ENCODE measurements at regions of chr14 and their contacts with region 1.

Region 1: DNA sequence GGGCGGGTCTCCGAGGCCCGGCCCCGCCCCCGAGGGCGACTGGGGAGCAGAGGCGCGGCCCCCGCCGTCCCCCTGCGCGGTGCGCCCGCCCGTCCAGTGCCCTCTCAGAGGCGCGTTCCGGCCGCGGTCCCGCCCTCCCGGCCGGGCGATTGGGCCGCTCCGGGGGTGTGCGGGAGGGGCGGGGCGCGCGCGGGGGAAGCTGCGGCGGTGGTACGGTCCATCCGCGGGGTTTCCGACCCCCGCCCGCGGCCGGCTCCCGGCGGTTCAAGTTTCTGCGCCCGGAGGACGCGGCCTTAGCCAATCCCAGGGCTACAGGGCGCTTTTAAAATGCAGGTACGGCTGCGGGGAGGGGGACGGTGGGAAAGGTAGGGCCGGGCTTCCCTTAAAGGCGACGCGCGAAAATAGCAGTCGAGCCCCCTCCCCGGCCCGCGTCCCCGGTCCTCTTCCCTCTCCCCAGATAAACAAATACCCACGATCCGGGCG is 317 bp upstream of the CCDC85C start:
- DNase-seq: peak; percentile 90 to 99 (median 96)
- ATAC-seq: peak; percentile 86 to 91
- H3K4me3 Mint-ChIP-seq: peak overlapping the region; percentile 84 to 97 (median 93)
- H3K27ac Mint-ChIP-seq: peak overlapping the region in 8 of 10 donors; percentile 54 to 94 (median 92)
- H3K4me1 Mint-ChIP-seq: peaks cover 20 to 39% (median 31%) of the 10 kb centered on the region in 4 donors
- H3K27me3 Mint-ChIP-seq: peaks cover 0 to 5% (median 0%) of the 10 kb centered on the region in 5 donors

Region 2: DNA sequence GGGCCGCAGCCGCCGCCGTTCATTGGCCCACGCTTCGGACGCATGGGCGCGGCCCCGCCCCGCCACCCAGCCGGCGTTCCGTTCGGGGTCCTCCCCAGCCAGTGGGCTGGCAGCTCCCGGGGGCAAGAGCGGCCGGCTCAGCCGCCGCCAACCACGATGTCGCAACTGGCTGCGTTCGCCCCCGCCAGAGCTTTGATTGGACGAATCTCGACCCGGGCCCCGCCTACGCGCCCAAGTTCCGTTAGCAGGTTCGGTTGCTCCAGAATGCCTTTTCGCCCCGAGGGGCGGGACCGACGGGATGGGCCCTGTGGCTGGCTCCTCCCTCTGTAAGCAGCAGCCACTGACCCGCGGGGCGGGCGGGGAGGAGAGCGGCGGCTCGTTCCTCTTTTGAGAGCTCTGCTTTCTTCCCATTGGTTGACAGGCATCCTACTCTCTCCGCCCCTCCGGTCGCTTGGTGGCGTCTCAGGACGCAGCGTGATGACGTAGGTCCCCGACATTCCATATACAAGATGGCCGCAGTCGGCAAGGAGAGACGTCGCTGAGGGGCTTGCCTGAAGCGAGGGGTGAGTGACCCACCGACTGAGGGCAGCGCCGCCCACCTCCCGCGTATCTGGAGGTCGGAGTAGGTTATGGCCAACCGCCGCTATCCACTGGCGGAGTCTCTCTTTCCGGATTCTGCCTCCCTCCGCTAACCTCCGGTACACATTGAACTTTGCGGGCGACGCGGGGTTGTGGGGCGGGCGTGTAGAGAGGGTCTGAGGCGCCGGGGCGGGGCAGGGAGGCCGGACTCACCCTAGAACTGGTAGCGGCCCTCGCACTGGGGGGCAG is 123.2 kb before region 1 on chr14 and contains the start of gene CCNK:
- POLR2A ChIA-PET with region 1: interaction called, 27 read pairs
- DNase-seq: peak; percentile 97 to 100 (median 100)
- ATAC-seq: peak; percentile 85 to 86
- H3K4me3 Mint-ChIP-seq: peak within 1 kb of the TSS; percentile 92 to 99 (median 98)
- H3K27ac Mint-ChIP-seq: peak within 1 kb of the TSS; percentile 97 to 100 (median 99)
- H3K4me1 Mint-ChIP-seq: peaks cover 36 to 78% (median 70%) of the 10 kb centered on the region in 4 donors
- H3K27me3 Mint-ChIP-seq: no peaks in the 10 kb centered on the region
- polyA plus RNA-seq, gene CCNK: 13.4 to 19.8 (median 14.0) TPM

Region 3: DNA sequence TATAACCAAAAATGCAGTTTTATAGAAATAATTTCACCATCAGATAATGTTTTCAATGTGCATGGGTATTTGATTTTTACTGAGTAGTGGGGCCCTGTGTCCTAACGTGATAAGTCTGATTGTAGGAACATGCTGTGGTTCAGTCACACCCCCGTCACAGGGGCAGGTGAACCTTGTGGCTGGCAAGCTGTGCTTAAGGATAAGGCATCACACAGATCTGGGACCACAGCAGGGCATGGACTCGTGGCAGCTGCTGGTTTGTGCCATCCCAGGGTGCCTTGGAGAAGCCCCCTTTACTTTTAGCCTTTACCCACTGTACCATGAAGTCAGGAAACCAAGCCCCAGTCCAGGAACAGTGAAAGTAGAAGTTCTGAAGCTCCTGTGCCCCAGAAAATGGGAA is 106.4 kb before region 1 on chr14:
- POLR2A ChIA-PET with region 1: no interaction called
- DNase-seq: no peak
- ATAC-seq: no peak
- H3K4me3 Mint-ChIP-seq: no peak overlapping the region
- H3K27ac Mint-ChIP-seq: peak overlapping the region in 1 of 10 donors; percentile 40
- H3K4me1 Mint-ChIP-seq: peaks cover 0 to 20% (median 10%) of the 10 kb centered on the region in 4 donors
- H3K27me3 Mint-ChIP-seq: no peaks in the 10 kb centered on the region

Region 4: GRCh38 chr14:99524804-99525698 is 79.3 kb before region 1 on chr14:
- POLR2A ChIA-PET with region 1: interaction called, 17 read pairs
- DNase-seq: peak in 3 of 10 donors; percentile 11 to 42 (median 41)
- ATAC-seq: peak; percentile 64 to 78
- H3K4me3 Mint-ChIP-seq: peak overlapping the region; percentile 33 to 79 (median 70)
- H3K27ac Mint-ChIP-seq: peak overlapping the region; percentile 63 to 97 (median 94)
- H3K4me1 Mint-ChIP-seq: peaks cover 6 to 21% (median 13%) of the 10 kb centered on the region in 4 donors
- H3K27me3 Mint-ChIP-seq: no peaks in the 10 kb centered on the region

Region 5: GRCh38 chr14:99683619-99684355 is 79.5 kb after region 1 on chr14 and contains the start of gene CYP46A1:
- POLR2A ChIA-PET with region 1: interaction called, 10 read pairs
- DNase-seq: peak; percentile 94 to 100 (median 99)
- ATAC-seq: peak; percentile 86 to 92
- H3K4me3 Mint-ChIP-seq: peak within 1 kb of the TSS; percentile 85 to 96 (median 93)
- H3K27ac Mint-ChIP-seq: peak within 1 kb of the TSS; percentile 55 to 96 (median 91)
- H3K4me1 Mint-ChIP-seq: peaks cover 8 to 28% (median 20%) of the 10 kb centered on the region in 4 donors
- H3K27me3 Mint-ChIP-seq: peaks cover 2 to 22% (median 9%) of the 10 kb centered on the region in 5 donors
- polyA plus RNA-seq, gene CYP46A1: 0.02 TPM in 1 of 3 donors, not detected in the others